ENCODE measurements at regions of chr10 and their contacts with region 1.

Region 1: GRCh38 chr10:98414932-98415730 is at the start of gene PYROXD2:
- DNase-seq: peak; percentile 94
- ATAC-seq: peak; percentile 96
- total RNA-seq, gene PYROXD2: 10.7 TPM

Region 2: GRCh38 chr10:98323221-98324164 is 91.6 kb before region 1 on chr10:
- intact Hi-C with region 1: loop called (anchors 5 kb)
- DNase-seq: peak; percentile 90
- ATAC-seq: peak; percentile 93

Region 3: DNA sequence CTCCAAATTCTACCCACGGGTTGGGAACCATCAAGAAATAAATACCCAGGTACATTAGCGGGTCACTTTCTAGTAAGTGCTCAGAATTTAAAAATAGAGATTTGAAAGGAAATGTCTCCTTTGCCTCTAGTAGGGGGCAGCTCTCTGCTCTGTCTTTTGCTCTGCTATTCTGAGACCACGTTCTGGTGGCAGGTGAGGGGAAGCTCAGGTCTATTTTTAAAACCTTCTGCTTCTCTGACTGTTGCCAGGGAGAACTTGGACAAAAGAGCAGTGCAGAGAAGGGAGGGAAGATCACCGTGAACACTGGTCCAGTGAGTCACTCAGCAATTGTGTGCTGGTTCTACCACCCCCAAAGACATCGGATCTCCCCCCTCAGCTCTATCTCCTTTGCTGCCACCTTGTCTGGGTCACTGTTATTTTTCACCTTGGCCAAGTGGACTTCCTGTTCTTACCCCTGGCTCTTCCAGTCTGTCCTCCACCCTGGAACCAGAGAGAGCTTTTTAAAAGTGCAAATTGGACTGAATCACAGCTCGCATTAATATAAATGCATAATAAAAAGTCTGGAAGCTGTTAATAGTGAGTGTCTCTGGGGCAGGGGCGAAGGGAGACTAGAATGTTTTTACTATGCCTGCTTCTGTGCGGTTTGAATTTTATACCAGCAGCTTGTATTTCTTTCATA is 74.7 kb before region 1 on chr10:
- intact Hi-C with region 1: loop called (anchors 5 kb)
- DNase-seq: no peak
- ATAC-seq: peak; percentile 64